Gastrocnemius medialis (tissue), 4 donors: ENCODE measurements at regions of chr5 and their contacts with region 1.

Region 1: DNA sequence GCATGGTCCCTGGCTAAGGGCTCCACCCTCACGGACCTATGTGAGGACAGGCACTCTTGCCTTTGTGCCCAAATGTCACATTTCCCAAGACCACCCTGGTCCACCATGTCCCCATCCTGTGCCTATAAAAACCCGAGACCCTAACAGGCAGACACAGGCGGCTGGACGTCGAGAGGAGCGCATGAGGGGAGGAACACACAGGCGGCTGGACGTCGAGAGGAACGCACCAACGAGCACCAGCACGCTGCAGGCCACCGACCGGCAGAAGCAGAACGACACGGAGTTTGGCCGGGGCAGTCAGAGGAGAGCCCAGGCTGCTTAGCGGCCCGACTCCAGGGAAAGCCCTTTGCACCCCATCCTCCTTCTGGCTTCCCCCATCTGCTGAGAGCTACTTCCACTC is 119.9 kb downstream of the ADAMTS2 start:
- DNase-seq: no peak
- ATAC-seq: no peak
- H3K4me3 ChIP-seq: no peak overlapping the region
- H3K27ac ChIP-seq: no peak overlapping the region
- H3K4me1 ChIP-seq: no peaks in the 10 kb centered on the region
- H3K27me3 ChIP-seq: no peaks in the 10 kb centered on the region
- CTCF ChIP-seq: no peak
- POLR2A ChIP-seq: no peak

Region 2: DNA sequence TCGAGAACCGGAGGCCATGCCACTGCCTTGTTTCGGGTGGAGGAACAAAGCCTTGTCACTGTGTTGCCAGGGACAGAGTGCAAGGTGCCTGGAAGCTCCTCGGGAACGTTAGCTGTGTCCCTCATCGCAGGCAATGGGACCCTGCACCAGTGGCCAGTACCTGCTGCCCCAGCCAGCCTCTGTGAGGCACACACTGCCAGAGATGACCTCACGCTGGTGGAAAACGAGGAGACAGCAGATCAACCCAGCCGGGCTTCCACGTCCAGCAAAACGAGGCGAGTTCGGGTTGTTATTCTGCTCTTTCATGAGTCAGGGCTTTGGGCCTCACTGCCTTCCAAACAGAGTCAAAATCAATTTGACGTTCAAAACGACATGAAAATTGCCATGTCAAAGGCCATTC is 15.8 kb after region 1 on chr5:
- in situ Hi-C with region 1: no loop called
- intact Hi-C with region 1: loop called (anchors 1 kb)
- DNase-seq: peak in 1 of 2 donors; percentile 15
- ATAC-seq: no peak
- H3K4me3 ChIP-seq: no peak overlapping the region
- H3K27ac ChIP-seq: no peak overlapping the region
- H3K4me1 ChIP-seq: no peaks in the 10 kb centered on the region
- H3K27me3 ChIP-seq: peaks cover 0 to 4% (median 0%) of the 10 kb centered on the region in 3 donors
- CTCF ChIP-seq: no peak
- POLR2A ChIP-seq: no peak